Right ventricle myocardium superior (tissue), 1 donor: ENCODE measurements at regions of chr2 and their contacts with region 1.

Region 1: GRCh38 chr2:203225423-203226039 is 13.3 kb upstream of the CYP20A1 start:
- DNase-seq: no peak
- ATAC-seq: peak; percentile 41

Region 2: DNA sequence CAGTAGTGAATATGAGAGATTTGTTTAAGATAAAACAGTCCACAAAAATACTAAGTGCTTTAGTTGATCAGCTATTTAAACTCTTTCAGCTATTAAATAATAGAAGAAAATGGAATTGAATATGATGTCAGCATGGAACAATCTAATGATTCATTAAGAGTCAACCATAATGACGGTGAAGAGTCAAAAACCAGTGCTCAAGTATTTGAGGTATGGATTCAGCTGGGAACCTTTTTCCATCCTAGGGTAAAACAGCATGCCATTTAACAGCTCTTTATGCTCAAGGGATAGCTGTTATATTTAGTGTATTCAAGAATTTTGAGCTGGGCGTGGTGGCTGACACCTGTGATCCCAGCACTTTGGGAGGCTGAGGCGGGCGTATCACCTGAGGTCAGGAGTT is 283.8 kb before region 1 on chr2:
- intact Hi-C with region 1: no loop called
- DNase-seq: no peak
- ATAC-seq: no peak

Region 3: DNA sequence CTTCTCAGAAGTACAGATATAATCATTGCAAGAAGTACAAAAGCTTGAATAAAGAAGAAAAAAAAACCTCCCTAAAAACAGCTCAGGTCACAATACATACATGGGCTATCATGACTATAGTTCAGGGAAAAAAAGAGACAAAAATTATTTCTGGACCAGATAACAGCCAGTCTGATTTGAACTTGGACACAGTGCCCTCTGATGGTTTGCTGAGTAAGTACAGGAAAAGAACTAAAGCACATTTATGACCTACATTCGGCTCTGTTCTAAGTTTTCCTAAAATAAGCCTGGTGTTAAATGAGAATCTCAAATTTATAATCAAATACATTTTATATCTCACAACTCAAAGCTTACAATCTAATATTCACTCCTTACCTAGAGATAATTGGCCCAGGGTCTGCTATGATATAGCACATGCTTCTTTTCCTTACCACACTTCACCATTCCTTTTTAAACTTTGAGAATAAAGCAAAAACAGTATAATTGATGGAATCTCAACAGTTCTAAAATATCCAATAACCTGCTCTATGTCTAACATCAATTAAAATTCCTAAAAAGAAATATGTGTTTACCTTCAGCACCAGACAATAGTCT is 228.4 kb after region 1 on chr2:
- intact Hi-C with region 1: loop called (anchors 5 kb)
- DNase-seq: no peak
- ATAC-seq: peak; percentile 81